ENCODE measurements at regions of chr2 and their contacts with region 1.

Region 1: GRCh38 chr2:235135990-235136561 is 184.3 kb downstream of the SH3BP4 start:
- DNase-seq: peak; percentile 86
- ATAC-seq: peak; percentile 94
- H3K4me3 ChIP-seq: no peak overlapping the region
- H3K27ac ChIP-seq: no peak overlapping the region
- H3K4me1 ChIP-seq: no peaks in the 10 kb centered on the region
- H3K27me3 ChIP-seq: no peaks in the 10 kb centered on the region
- CTCF ChIP-seq: peak; percentile 83

Region 2: GRCh38 chr2:234863043-234863934 is 272.8 kb before region 1 on chr2:
- CTCF ChIA-PET with region 1: no interaction called
- POLR2A ChIA-PET with region 1: no interaction called
- intact Hi-C with region 1: no loop called
- DNase-seq: peak; percentile 49
- ATAC-seq: peak; percentile 38; the same call in 1 of the 2 replicates
- H3K4me3 ChIP-seq: no peak overlapping the region
- H3K27ac ChIP-seq: no peak overlapping the region
- H3K4me1 ChIP-seq: peaks cover 9% of the 10 kb centered on the region; the same call in 1 of the 2 replicates
- H3K27me3 ChIP-seq: no peaks in the 10 kb centered on the region
- CTCF ChIP-seq: no peak

Region 3: GRCh38 chr2:235263205-235264122 is 127.4 kb after region 1 on chr2:
- CTCF ChIA-PET with region 1: no interaction called
- POLR2A ChIA-PET with region 1: no interaction called
- intact Hi-C with region 1: loop called (anchors 1 kb)
- DNase-seq: peak; percentile 84
- ATAC-seq: peak; percentile 96
- H3K4me3 ChIP-seq: peak overlapping the region; percentile 50; the same call in 1 of the 2 replicates
- H3K27ac ChIP-seq: peak overlapping the region; percentile 45
- H3K4me1 ChIP-seq: peaks cover 12% of the 10 kb centered on the region
- H3K27me3 ChIP-seq: no peaks in the 10 kb centered on the region
- CTCF ChIP-seq: no peak

Region 4: GRCh38 chr2:235433860-235434259 is 297.8 kb after region 1 on chr2:
- CTCF ChIA-PET with region 1: no interaction called
- POLR2A ChIA-PET with region 1: no interaction called
- intact Hi-C with region 1: loop called (anchors 1 kb)
- DNase-seq: peak; percentile 61
- ATAC-seq: peak; percentile 88
- H3K4me3 ChIP-seq: no peak overlapping the region
- H3K27ac ChIP-seq: no peak overlapping the region
- H3K4me1 ChIP-seq: no peaks in the 10 kb centered on the region
- H3K27me3 ChIP-seq: no peaks in the 10 kb centered on the region
- CTCF ChIP-seq: peak; percentile 31; the same call in 1 of the 2 replicates

Region 5: DNA sequence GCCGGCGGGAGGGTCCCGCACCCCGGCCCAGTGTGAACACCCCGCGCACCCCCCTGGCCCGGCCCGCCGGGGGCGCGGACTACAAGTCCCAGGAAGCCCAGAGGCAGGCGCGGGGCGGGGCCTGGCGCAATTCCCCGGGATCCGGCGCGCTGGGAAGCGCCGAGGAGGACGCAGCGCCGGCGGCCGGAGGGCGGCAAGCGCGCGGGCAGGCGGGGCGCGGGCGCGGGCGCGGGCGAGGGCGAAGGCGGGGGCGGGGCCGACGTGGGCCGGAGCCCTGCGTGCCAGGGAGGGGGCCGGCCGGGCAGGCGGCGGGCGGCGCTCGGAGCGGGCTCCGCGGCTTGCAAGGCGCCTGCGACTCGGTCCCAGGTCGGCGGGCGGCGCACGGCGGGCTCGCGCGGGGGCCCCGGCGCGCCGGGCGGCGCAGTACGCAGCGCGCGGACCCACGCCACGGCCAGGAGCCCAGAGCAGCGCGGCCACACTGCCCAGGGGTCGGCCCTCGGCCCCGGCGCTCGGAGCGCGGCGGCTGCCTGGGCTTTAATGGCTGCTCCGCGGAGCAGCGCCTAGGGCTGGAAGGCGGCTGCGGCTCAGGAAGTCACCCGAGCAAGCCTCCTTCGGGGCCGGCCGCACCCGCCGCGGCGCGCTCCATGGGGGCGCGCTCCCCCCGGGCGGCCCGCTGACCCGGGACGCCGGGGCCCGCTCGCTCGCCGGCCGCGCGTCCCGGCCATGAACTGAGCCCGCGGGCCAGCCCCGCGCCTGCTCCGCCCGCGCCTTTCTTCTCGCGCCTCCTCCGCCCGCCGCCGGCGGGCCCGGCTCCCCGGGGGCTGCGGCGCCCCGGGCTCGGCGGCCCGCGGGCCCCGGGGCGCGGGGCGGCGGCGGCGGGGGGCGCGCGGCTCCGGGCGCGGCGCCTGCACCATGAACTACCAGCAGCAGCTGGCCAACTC is 358.0 kb after region 1 on chr2 and contains the start of gene AGAP1:
- CTCF ChIA-PET with region 1: no interaction called
- POLR2A ChIA-PET with region 1: no interaction called
- intact Hi-C with region 1: loop called (anchors 1 kb)
- DNase-seq: peak; percentile 90
- ATAC-seq: peak; percentile 80
- H3K4me3 ChIP-seq: peak within 1 kb of the TSS; percentile 81
- H3K27ac ChIP-seq: peak within 1 kb of the TSS; percentile 54
- H3K4me1 ChIP-seq: peaks cover 20% of the 10 kb centered on the region
- H3K27me3 ChIP-seq: no peaks in the 10 kb centered on the region
- CTCF ChIP-seq: no peak
- total RNA-seq, gene AGAP1: 28.6 and 31.0 TPM in 2 replicates

Region 6: DNA sequence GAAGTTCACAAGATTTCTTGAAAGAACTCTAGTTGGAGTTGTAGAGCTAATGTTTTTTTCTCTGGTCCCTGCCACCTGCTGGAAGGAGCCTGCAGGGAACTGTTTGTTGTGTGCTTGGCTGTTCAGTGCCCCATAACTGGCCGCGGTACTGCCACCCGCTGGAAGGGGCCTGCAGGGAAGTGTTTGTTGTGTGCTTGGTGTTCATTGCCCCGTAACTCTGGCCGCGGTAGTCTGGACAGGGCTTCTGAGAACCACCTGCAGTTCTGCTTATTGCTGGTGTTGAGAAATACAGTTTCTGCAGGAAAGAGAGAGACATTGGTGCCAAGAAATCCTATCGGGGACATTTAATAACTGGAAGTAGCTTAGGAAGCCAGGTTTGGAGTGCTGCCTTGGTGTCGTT is 415.9 kb after region 1 on chr2:
- CTCF ChIA-PET with region 1: no interaction called
- POLR2A ChIA-PET with region 1: no interaction called
- intact Hi-C with region 1: loop called (anchors 2 kb)
- DNase-seq: peak; percentile 71
- ATAC-seq: peak; percentile 98
- H3K4me3 ChIP-seq: no peak overlapping the region
- H3K27ac ChIP-seq: no peak overlapping the region
- H3K4me1 ChIP-seq: peaks cover 8% of the 10 kb centered on the region; the same call in 1 of the 2 replicates
- H3K27me3 ChIP-seq: no peaks in the 10 kb centered on the region
- CTCF ChIP-seq: peak; percentile 83

Region 7: DNA sequence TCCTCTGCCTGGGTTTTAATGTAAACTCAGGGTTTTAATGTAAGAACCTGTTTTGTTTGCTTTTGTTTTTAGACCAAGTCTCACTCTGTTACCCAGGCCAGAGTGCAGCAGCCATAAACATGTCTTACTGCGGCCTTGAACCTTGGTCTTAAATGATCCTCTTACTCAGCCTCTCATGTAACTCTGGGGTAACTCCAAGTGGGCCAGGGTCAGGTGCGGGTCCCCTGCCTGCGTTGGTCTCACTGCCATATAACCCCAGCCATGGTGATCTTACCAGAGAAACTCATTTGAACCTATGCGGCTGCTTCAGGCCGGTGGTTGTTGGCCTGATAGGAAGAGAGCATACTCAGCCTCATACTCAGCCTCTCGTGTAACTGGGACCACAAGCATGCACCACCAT is 447.1 kb after region 1 on chr2:
- CTCF ChIA-PET with region 1: interaction called, 4 read pairs
- POLR2A ChIA-PET with region 1: interaction called, 19 read pairs
- intact Hi-C with region 1: no loop called
- DNase-seq: no peak
- ATAC-seq: no peak
- H3K4me3 ChIP-seq: no peak overlapping the region
- H3K27ac ChIP-seq: no peak overlapping the region
- H3K4me1 ChIP-seq: no peaks in the 10 kb centered on the region
- H3K27me3 ChIP-seq: no peaks in the 10 kb centered on the region
- CTCF ChIP-seq: no peak

Region 8: DNA sequence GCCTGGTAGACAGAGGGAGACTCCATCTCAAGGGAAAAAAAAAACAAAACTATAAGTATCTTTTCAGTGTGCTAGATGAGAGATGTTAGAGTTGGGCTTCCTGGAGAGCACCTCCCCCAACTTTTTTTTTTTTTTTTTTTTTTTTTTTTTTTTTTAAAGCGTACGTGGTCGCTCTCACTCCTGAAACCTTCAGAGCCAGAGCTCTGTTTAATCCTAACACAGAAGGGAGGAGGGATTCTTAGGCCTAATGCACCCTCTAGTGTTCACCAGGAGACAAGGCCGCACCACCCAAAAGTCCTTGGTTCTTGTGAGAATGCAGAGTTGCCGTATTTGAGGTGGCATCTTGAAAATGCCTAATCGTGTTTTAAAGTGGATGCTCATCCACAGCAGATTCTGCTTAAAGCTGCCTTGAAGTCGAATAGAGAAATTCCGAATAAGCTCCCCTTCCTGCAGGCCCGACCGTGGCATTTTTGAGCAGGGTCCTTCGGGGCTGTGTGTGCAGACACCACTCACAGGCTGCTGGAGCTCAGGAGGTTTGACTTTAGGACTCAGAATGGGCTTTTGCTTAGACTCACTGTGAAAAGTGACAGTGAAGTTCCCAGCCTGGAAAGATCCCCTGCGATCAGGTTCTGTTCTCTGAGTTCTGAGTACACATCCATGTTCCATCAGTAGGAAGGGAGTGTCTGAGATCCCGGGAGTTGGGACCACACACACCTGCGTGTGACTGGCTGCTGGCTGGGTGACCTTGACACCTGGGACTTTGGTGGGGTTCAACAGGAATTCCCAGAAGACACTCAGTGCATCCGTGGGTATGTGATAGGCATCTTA is 610.4 kb after region 1 on chr2:
- CTCF ChIA-PET with region 1: interaction called, 4 read pairs
- POLR2A ChIA-PET with region 1: no interaction called
- intact Hi-C with region 1: loop called (anchors 2 kb)
- DNase-seq: peak; percentile 81
- ATAC-seq: peak; percentile 97
- H3K4me3 ChIP-seq: no peak overlapping the region
- H3K27ac ChIP-seq: no peak overlapping the region
- H3K4me1 ChIP-seq: peaks cover 6% of the 10 kb centered on the region; the same call in 1 of the 2 replicates
- H3K27me3 ChIP-seq: no peaks in the 10 kb centered on the region
- CTCF ChIP-seq: peak; percentile 79

Measured in PC-3 (cell line).